Activated T-helper 1 cell treated with anti-CD3 and anti-CD28 coated beads, Interleukin-12 subunit alpha, Interleukin-12 subunit beta, Interleukin-2, Interleukin-4 antibody, amounts not matched to agents 30 ng/mL and 10 ng/mL and 1 ng/mL, durations not matched to agents 14 hours and 24 hours and 36 hours (primary cell): ENCODE measurements at regions of chr6 and their contacts with region 1.

Region 1: DNA sequence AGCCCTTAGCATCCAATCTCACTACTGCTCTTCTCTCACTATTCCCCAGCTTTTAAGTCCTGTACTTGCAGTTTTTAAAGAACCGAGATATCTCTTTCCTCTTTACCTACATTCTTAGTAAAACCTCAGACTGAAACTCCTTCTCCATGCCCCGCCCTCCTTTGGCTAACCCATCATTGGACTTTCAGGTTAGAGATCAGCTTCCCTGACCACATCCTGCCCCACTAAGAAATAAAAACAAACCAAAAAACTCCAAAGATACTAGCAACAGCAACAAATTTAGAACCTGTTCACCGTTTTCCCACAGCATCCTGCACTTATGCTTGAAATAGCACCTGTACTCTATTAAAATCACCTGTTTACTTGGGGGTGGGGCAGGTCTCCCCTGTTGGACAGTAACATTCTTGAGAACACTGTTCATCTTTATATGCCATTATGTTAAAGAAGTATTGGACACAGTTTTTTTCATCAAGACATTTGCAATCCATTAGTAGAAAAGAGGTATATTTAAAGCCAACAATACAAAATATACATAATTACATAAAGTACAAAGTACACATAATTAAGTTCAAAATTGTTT is 16.3 kb upstream of the SMAP1 start:
- DNase-seq: peak; percentile 71
- H3K4me3 Mint-ChIP-seq: peak overlapping the region; percentile 47
- H3K27ac Mint-ChIP-seq: peak overlapping the region; percentile 71
- H3K4me1 Mint-ChIP-seq: peaks cover 37% of the 10 kb centered on the region
- H3K27me3 Mint-ChIP-seq: no peaks in the 10 kb centered on the region

Region 2: DNA sequence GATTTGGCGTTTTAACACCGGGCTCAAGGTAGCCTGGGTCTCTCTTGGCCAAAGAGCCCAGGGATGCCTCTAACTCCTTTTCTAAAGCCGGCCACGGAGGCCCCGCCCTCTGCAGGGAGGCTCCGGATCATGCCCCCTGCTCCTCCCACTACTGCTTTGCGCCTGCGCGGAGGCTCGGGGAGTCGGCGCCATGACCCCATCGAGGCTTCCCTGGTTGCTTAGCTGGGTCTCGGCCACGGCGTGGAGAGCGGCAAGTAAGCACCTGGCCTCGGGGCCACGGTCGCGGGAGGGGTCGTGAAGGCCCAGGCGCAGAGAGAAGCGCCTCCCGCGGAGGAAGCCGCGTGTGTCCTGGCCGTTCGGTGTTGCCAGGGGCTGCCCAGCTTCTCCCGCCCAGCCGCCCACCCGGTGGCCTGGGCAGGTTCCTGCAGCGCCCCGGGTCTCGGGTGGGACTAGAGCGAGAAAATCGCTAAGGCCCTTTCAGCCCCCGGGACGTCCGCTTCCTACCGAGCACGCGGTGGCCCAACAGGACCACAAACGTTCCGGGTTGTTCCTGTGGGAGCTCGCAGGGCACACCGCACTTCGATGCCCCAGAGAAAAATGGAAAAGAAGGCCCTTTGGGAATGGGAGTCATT is 84.5 kb before region 1 on chr6 and contains the start of gene SDHAF4:
- intact Hi-C with region 1: loop called (anchors 1 kb)
- DNase-seq: peak; percentile 92
- H3K4me3 Mint-ChIP-seq: peak within 1 kb of the TSS; percentile 88
- H3K27ac Mint-ChIP-seq: peak within 1 kb of the TSS; percentile 81
- H3K4me1 Mint-ChIP-seq: peaks cover 31% of the 10 kb centered on the region
- H3K27me3 Mint-ChIP-seq: no peaks in the 10 kb centered on the region
- total RNA-seq, gene SDHAF4: 10.6 and 11.8 TPM in 2 replicates

Region 3: GRCh38 chr6:70599187-70599586 is 52.2 kb before region 1 on chr6:
- intact Hi-C with region 1: loop called (anchors 2 kb)
- DNase-seq: peak; percentile 37
- H3K4me3 Mint-ChIP-seq: no peak overlapping the region
- H3K27ac Mint-ChIP-seq: no peak overlapping the region
- H3K4me1 Mint-ChIP-seq: peaks cover 20% of the 10 kb centered on the region
- H3K27me3 Mint-ChIP-seq: no peaks in the 10 kb centered on the region

Region 4: GRCh38 chr6:70667711-70668498 is 16.5 kb after region 1 on chr6 and contains the start of gene SMAP1:
- intact Hi-C with region 1: loop called (anchors 1 kb)
- DNase-seq: peak; percentile 91
- H3K4me3 Mint-ChIP-seq: peak within 1 kb of the TSS; percentile 90
- H3K27ac Mint-ChIP-seq: peak within 1 kb of the TSS; percentile 92
- H3K4me1 Mint-ChIP-seq: peaks cover 59% of the 10 kb centered on the region
- H3K27me3 Mint-ChIP-seq: no peaks in the 10 kb centered on the region
- total RNA-seq, gene SMAP1: 24.3 and 26.3 TPM in 2 replicates